Activated CD4-positive, alpha-beta T cell treated with anti-CD3 and anti-CD28 coated beads for 36 hours (primary cell): ENCODE measurements at regions of chr3 and their contacts with region 1.

Region 1: DNA sequence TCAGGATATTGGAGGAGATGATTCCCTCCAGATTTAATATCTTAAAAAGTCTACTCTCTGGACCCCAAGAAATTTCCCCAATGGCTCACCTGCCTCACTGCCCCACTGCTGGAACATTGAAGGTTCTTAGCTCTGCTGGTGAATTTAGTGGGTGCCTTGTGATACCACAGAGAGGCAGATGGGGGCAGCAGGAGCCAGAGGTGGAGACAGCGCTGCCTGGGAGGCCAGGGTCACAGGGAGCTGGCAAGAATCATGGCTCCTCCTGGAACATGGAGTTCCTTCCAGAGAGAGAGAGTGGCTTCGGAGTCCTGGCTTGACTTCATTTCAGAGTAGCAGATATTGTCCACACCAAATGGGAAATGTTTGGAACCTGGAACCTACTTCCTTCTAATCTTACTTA is 263.5 kb upstream of the CFAP20DC start:
- DNase-seq: peak; percentile 74
- ATAC-seq: peak; percentile 86
- H3K4me3 Mint-ChIP-seq: no peak overlapping the region
- H3K27ac Mint-ChIP-seq: no peak overlapping the region
- H3K4me1 Mint-ChIP-seq: peaks cover 17% of the 10 kb centered on the region
- H3K27me3 Mint-ChIP-seq: no peaks in the 10 kb centered on the region

Region 2: GRCh38 chr3:59049671-59050331 is 263.6 kb before region 1 on chr3 and contains the start of gene CFAP20DC:
- CTCF ChIA-PET with region 1: no interaction called
- POLR2A ChIA-PET with region 1: no interaction called
- intact Hi-C with region 1: no loop called
- DNase-seq: peak; percentile 97
- ATAC-seq: peak; percentile 99
- H3K4me3 Mint-ChIP-seq: peak within 1 kb of the TSS; percentile 66
- H3K27ac Mint-ChIP-seq: peak within 1 kb of the TSS; percentile 65
- H3K4me1 Mint-ChIP-seq: peaks cover 9% of the 10 kb centered on the region
- H3K27me3 Mint-ChIP-seq: peaks cover 2% of the 10 kb centered on the region
- total RNA-seq, gene CFAP20DC: 2.7 to 3.5 TPM

Region 3: DNA sequence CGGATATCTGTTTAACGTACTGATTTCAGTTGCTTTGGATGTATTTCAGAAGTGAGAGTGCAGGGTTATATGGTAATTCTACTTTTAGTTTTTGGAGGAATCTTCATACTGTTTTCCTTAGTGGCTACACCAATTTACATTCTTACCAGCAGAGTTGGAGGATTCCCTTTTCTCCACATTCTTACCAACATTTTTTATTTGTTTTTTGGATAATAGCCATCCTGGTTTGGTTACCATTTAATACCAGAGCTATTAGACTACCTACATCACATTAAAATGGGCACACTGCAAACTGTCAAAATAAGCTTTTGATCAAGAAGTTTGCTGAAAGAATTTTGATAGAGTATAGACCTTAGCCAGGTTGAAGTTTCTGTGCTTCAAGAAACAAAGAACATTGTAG is 46.3 kb before region 1 on chr3:
- CTCF ChIA-PET with region 1: no interaction called
- POLR2A ChIA-PET with region 1: no interaction called
- intact Hi-C with region 1: no loop called
- DNase-seq: no peak
- ATAC-seq: no peak
- H3K4me3 Mint-ChIP-seq: no peak overlapping the region
- H3K27ac Mint-ChIP-seq: no peak overlapping the region
- H3K4me1 Mint-ChIP-seq: peaks cover 6% of the 10 kb centered on the region
- H3K27me3 Mint-ChIP-seq: no peaks in the 10 kb centered on the region

Region 4: GRCh38 chr3:59424268-59425010 is 111.1 kb after region 1 on chr3:
- CTCF ChIA-PET with region 1: interaction called, 5 read pairs
- POLR2A ChIA-PET with region 1: no interaction called
- intact Hi-C with region 1: loop called (anchors 5 to 10 kb)
- DNase-seq: peak; percentile 35
- ATAC-seq: no peak
- H3K4me3 Mint-ChIP-seq: peak overlapping the region; percentile 8
- H3K27ac Mint-ChIP-seq: peak overlapping the region; percentile 68
- H3K4me1 Mint-ChIP-seq: peaks cover 74% of the 10 kb centered on the region
- H3K27me3 Mint-ChIP-seq: peaks cover 10% of the 10 kb centered on the region

Region 5: DNA sequence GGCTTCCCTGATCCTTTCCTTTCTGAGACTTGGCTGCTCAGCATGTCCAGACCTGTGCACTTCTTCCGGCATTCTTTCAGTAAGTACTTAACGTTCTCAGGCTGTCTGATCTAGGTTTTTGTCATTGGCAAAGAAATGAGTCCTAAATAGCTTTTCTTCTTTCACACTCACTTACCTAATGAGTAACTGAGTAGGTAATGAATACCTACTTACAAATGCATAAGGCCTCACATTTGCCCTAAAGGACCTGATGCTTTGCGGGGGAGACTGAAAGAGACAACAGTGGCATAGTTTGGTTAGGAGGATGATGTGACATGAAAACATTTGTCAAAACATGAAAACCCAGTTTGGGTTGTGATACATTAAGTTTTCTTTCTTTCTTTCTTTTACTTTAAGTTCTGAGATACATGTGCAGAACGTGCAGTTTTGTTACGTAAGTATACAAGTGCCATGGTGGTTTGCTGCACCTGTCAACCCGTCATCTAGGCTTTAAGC is 253.2 kb after region 1 on chr3:
- CTCF ChIA-PET with region 1: no interaction called
- POLR2A ChIA-PET with region 1: no interaction called
- intact Hi-C with region 1: loop called in 1 of 2 experiments (anchors 2 kb)
- DNase-seq: peak; percentile 46
- ATAC-seq: peak; percentile 98
- H3K4me3 Mint-ChIP-seq: no peak overlapping the region
- H3K27ac Mint-ChIP-seq: peak overlapping the region; percentile 45
- H3K4me1 Mint-ChIP-seq: peaks cover 17% of the 10 kb centered on the region
- H3K27me3 Mint-ChIP-seq: peaks cover 4% of the 10 kb centered on the region

Region 6: DNA sequence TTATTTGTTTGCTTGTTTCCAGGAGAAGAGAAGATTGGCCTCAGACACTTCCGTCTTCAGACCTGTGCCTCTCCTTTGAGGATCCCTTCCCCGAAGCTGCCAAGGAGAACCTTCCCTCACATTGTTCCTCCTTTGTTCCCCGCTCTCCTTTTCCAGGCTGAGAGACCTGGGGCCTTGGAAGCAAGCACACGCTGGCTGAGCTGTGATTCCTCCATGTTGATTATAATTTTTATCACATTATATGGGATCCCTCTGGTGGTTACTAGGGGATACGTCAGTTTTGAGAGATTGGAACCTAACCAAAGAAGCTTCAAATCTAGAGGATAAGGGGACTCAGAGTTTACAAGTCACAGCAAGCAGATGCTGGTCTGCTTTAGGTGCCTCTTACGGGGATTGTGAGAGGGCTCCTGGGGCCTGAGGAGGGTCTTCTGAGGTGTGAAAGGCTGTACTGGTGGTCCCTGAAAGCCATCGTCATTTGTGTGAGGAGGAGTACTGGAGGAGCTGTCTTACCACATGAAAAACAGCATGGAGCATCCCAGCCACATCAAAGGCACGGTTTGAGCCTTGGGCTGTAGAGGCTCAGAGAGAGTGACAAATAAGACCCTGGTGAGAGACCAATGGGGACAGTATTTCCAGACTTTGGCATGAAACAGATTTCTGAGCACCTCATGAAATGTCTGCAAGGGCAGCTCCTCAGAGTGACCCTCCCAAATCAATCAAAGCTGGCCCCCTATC is 496.5 kb after region 1 on chr3:
- CTCF ChIA-PET with region 1: interaction called, 8 read pairs
- POLR2A ChIA-PET with region 1: no interaction called
- intact Hi-C with region 1: loop called in 1 of 2 experiments (anchors 1 kb)
- DNase-seq: no peak
- ATAC-seq: peak; percentile 30
- H3K4me3 Mint-ChIP-seq: no peak overlapping the region
- H3K27ac Mint-ChIP-seq: no peak overlapping the region
- H3K4me1 Mint-ChIP-seq: peaks cover 6% of the 10 kb centered on the region
- H3K27me3 Mint-ChIP-seq: no peaks in the 10 kb centered on the region